B cell (primary cell): ENCODE measurements at regions of chr7 and their contacts with region 1.

Region 1: GRCh38 chr7:5477723-5478531 is 54.3 kb upstream of the TNRC18 start:
- DNase-seq: peak; percentile 68
- ATAC-seq: peak; percentile 96
- H3K4me3 ChIP-seq: peak overlapping the region; percentile 30 to 69 (median 54)
- H3K4me3 Mint-ChIP-seq: peak overlapping the region; percentile 94
- H3K27ac ChIP-seq: no peak overlapping the region
- H3K27ac Mint-ChIP-seq: peak overlapping the region; percentile 76
- H3K4me1 ChIP-seq: peaks cover 9 to 13% of the 10 kb centered on the region in 2 donors
- H3K4me1 Mint-ChIP-seq: peaks cover 11% of the 10 kb centered on the region
- H3K27me3 ChIP-seq: no peaks in the 10 kb centered on the region
- H3K27me3 Mint-ChIP-seq: no peaks in the 10 kb centered on the region
- CTCF ChIP-seq: peak; percentile 38

Region 2: GRCh38 chr7:5348134-5349004 is 129.6 kb before region 1 on chr7:
- CTCF ChIA-PET with region 1: no interaction called
- POLR2A ChIA-PET with region 1: no interaction called
- intact Hi-C with region 1: no loop called
- DNase-seq: no peak
- ATAC-seq: no peak
- H3K4me3 ChIP-seq: no peak overlapping the region
- H3K4me3 Mint-ChIP-seq: no peak overlapping the region
- H3K27ac ChIP-seq: no peak overlapping the region
- H3K27ac Mint-ChIP-seq: no peak overlapping the region
- H3K4me1 ChIP-seq: no peaks in the 10 kb centered on the region
- H3K4me1 Mint-ChIP-seq: no peaks in the 10 kb centered on the region
- H3K27me3 ChIP-seq: no peaks in the 10 kb centered on the region
- H3K27me3 Mint-ChIP-seq: no peaks in the 10 kb centered on the region
- CTCF ChIP-seq: no peak

Region 3: GRCh38 chr7:5514440-5515035 is 36.6 kb after region 1 on chr7:
- CTCF ChIA-PET with region 1: no interaction called
- POLR2A ChIA-PET with region 1: interaction called, 12 read pairs
- intact Hi-C with region 1: no loop called
- DNase-seq: no peak
- ATAC-seq: no peak
- H3K4me3 ChIP-seq: peak overlapping the region in 3 of 5 experiments; percentile 78 to 85 (median 82)
- H3K4me3 Mint-ChIP-seq: peak overlapping the region; percentile 100
- H3K27ac ChIP-seq: no peak overlapping the region
- H3K27ac Mint-ChIP-seq: no peak overlapping the region
- H3K4me1 ChIP-seq: peaks cover 15 to 25% of the 10 kb centered on the region in 2 donors
- H3K4me1 Mint-ChIP-seq: peaks cover 12% of the 10 kb centered on the region
- H3K27me3 ChIP-seq: no peaks in the 10 kb centered on the region
- H3K27me3 Mint-ChIP-seq: no peaks in the 10 kb centered on the region
- CTCF ChIP-seq: no peak